Activated CD4-positive, alpha-beta T cell treated with anti-CD3 and anti-CD28 coated beads for 36 hours (primary cell): ENCODE measurements at regions of chr17 and their contacts with region 1.

Region 1: DNA sequence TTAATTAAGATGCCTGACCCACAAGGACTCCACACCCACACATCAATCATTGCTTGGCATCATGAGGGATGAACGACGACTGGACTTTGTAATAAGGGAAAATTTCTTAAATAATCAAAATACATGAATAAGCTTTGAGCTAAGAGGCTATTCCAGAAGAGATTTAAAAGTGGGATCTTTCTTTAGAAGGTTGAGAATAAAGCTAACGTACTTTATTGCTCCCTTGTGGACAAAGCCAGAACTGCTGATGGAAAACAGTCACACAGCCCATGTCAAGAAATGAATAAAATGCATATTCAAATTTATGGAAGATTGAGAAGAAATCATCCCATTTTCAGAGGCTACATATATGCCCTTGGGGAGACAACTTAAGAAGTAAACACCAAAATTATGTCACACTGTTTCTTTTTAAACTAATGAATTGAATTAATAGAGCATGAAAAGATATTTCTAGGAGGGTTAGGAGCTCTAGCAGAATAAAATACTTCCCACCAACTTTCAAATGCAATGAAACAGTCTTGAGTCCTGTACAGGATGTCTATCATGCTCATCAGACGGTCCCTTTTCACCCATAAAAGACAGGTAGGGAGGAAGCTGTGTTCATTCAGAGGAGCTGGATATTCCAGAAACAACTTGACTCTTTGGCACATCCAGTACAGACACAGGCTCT is 60.2 kb upstream of the PHOSPHO1 start:
- DNase-seq: peak; percentile 20
- ATAC-seq: no peak
- H3K4me3 Mint-ChIP-seq: no peak overlapping the region
- H3K27ac Mint-ChIP-seq: no peak overlapping the region
- H3K4me1 Mint-ChIP-seq: peaks cover 6% of the 10 kb centered on the region
- H3K27me3 Mint-ChIP-seq: no peaks in the 10 kb centered on the region

Region 2: DNA sequence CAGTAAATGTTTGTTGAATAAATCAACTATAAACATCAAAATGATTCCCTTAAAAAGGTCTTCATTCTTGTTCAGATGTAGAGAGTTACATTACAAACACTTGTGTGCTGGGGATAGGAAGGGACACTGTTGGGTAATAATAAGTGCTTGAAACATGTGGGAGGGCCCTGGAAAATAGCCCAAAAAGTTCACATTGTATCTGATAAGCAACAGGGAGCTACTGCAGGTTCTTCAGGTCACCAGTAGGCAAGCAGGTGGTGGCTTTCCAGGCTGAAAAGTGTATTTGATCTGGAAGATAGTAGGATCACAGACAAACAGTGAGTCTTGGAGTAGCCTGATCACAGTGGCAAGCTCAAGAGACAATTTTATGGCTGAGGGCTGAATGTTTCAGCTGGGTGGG is 90.2 kb after region 1 on chr17:
- CTCF ChIA-PET with region 1: interaction called, 11 read pairs
- POLR2A ChIA-PET with region 1: no interaction called
- intact Hi-C with region 1: no loop called
- DNase-seq: no peak
- ATAC-seq: no peak
- H3K4me3 Mint-ChIP-seq: no peak overlapping the region
- H3K27ac Mint-ChIP-seq: no peak overlapping the region
- H3K4me1 Mint-ChIP-seq: no peaks in the 10 kb centered on the region
- H3K27me3 Mint-ChIP-seq: no peaks in the 10 kb centered on the region